Posterior vena cava (tissue), 2 donors: ENCODE measurements at regions of chr6 and their contacts with region 1.

Region 1: GRCh38 chr6:133977983-133978895 is 25.2 kb downstream of the TBPL1 start:
- DNase-seq: no peak

Region 2: DNA sequence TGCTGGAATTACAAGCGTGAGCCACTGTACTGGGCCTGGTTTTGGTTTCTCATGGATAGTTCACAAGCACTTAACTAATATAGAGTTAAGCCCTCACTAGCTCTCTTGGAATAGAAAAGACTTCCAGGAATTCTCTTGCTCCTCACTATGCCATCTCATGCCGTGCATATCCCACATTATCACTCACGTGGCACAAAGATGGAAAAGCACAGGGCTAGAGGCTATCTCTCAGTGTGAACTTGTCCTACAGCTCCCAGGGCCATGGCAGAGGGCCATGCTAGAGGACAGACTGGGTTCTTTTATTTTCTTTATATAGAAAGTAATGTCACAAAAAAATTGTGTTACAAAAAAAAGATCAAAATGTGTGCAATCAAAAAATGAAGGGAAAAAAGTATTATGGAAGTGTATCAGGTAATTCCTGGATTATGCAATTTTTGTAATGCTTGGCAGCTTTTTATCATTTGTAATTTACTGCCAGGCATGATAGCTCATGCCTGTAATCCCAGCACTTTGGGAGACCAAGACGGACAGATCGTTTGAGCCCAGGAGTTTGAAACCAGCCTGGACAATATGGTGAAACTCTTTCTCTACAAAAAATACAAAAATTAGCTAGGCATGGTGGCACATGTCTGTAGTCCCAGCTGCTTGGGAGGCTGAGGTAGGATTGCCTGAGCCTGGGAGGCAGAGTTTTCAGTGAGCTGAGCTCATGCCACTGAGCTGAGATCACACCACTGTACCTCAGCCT is 80.6 kb after region 1 on chr6:
- intact Hi-C with region 1: loop called (anchors 5 kb)
- DNase-seq: no peak